AG04449 (cell line): ENCODE measurements at regions of chr4 and their contacts with region 1.

Region 1: GRCh38 chr4:164768516-164768915 is 14.6 kb downstream of the SMIM31 start:
- DNase-seq: no peak
- H3K4me3 ChIP-seq: no peak overlapping the region
- CTCF ChIP-seq: peak; percentile 0

Region 2: GRCh38 chr4:164756686-164757085 is 11.8 kb before region 1 on chr4:
- CTCF ChIA-PET with region 1: interaction called, 11 read pairs
- POLR2A ChIA-PET with region 1: no interaction called
- DNase-seq: no peak
- H3K4me3 ChIP-seq: no peak overlapping the region
- CTCF ChIP-seq: no peak

Region 3: GRCh38 chr4:164779811-164780216 is 11.3 kb after region 1 on chr4:
- CTCF ChIA-PET with region 1: interaction called, 17 read pairs
- POLR2A ChIA-PET with region 1: no interaction called
- DNase-seq: no peak
- H3K4me3 ChIP-seq: no peak overlapping the region
- CTCF ChIP-seq: peak; percentile 63

Region 4: GRCh38 chr4:165096776-165097175 is 328.3 kb after region 1 on chr4:
- CTCF ChIA-PET with region 1: interaction called, 71 read pairs
- POLR2A ChIA-PET with region 1: no interaction called
- DNase-seq: no peak
- H3K4me3 ChIP-seq: no peak overlapping the region
- CTCF ChIP-seq: peak; percentile 48

Region 5: DNA sequence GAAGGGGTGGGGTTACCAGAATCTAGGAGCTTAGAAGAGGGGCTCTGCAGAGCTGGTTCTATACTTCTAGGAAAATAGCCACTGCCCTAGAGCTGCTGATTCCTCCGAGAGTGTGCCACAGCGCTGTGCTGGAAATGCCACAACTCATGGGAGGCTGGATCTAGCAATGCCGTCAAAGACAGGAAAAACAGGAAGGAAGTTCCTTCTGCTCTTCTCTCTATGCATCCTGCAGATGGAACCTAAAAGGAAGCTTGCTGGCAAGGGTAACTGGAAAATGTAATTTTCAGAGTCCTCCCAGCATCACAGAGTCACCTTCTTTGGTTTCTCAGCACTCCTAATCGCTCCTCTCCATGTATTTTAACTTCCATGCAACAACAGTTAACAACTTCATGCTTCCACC is 983.4 kb after region 1 on chr4:
- CTCF ChIA-PET with region 1: no interaction called
- POLR2A ChIA-PET with region 1: no interaction called
- DNase-seq: no peak
- H3K4me3 ChIP-seq: no peak overlapping the region
- CTCF ChIP-seq: no peak